H1 (cell line): ENCODE measurements at regions of chr4 and their contacts with region 1.

Region 1: DNA sequence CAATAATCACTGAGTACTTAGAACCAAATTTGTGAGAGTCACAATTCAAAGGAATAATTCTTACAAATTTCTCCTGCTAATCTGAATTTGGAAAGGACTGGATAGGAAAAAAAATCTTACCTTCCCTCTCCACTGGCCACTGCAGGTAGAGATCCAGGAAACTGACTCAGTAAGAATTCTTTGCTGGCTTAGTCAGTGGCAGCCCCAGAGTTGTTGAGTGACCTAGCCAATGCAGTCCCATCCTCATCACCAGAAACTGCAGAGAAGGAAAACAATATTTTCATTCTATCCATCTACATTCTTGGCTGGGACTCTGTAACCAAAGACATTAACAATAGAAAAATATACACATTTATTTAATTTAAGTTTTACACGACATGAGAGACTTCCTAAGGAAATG is 572.0 kb downstream of the ADGRL3 start:
- DNase-seq: no peak
- H3K4me3 ChIP-seq: no peak overlapping the region
- H3K27ac ChIP-seq: no peak overlapping the region
- H3K4me1 ChIP-seq: peaks cover 3 to 14% (median 11%) of the 10 kb centered on the region in 4 experiments; a peak in 5 of 7 replicates
- H3K27me3 ChIP-seq: no peaks in the 10 kb centered on the region
- CTCF ChIP-seq: no peak
- EP300 ChIP-seq: no peak
- POLR2A ChIP-seq: no peak
- RAD21 ChIP-seq: no peak

Region 2: DNA sequence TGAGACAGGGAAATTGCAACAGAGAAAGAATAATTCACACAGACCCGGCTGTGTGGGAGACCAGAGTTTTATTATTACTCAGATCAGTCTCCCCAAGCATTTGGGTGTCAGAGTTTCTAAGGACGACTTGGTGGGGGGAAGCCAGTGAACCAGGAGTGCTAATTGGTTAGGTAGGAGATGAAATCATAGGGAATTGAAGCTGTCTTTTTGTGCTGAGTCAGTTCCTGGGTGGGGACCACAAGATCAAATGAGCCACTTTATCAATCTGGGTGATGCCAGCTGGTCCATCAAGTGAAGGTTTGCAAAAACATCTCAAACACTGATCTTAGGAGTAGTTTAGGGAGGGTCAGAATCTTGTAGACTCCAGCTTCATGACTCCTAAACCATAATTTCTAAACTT is 11.3 kb before region 1 on chr4:
- CTCF ChIA-PET with region 1: no interaction called
- POLR2A ChIA-PET with region 1: interaction called, 37 read pairs
- DNase-seq: no peak
- H3K4me3 ChIP-seq: peak overlapping the region in 1 of 4 experiments; percentile 55; a peak in 2 of 8 replicates
- H3K27ac ChIP-seq: no peak overlapping the region
- H3K4me1 ChIP-seq: no peaks in the 10 kb centered on the region
- H3K27me3 ChIP-seq: no peaks in the 10 kb centered on the region
- CTCF ChIP-seq: no peak
- EP300 ChIP-seq: no peak
- POLR2A ChIP-seq: peak; percentile 28 to 46; a peak in 1 of 3 replicates
- RAD21 ChIP-seq: no peak

Region 3: DNA sequence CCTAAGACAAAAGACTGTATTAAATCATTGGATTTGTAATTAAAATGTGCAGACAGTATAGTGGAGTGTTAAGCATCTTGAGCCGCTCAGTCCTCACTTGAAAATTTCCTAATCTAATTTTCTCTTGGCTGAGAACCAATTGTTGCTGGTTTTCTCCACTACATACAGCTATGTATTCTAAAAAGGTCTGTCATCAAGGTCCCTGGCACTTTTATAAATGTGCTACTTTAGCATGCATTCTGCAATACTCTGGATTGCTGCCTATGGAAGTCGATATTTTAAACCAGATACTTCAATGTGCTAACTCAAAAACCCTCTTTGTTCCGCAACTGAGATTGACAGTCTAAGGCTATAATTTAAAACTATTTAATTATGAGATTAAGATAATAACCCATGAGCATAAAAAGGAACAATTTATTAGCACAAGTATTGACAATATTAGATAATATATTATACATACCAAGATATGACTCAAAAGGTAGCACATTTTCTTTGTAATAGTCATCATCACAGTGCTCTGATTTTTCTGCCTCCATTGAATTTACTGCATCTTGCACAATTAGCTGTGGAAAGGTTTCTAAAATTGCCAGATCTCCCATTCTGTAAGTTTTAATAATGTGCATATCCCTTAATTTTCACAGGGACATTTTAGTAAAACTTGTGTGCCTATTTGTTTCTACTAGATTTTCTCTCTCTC is 243.1 kb after region 1 on chr4:
- CTCF ChIA-PET with region 1: no interaction called
- POLR2A ChIA-PET with region 1: no interaction called
- DNase-seq: no peak
- H3K4me3 ChIP-seq: no peak overlapping the region
- H3K27ac ChIP-seq: no peak overlapping the region
- H3K4me1 ChIP-seq: no peaks in the 10 kb centered on the region
- H3K27me3 ChIP-seq: no peaks in the 10 kb centered on the region
- CTCF ChIP-seq: no peak
- EP300 ChIP-seq: no peak
- POLR2A ChIP-seq: no peak
- RAD21 ChIP-seq: no peak